H1 (cell line): ENCODE measurements at regions of chr2 and their contacts with region 1.

Region 1: GRCh38 chr2:27086090-27086723 is 365 bp upstream of the KHK start:
- DNase-seq: peak; percentile 79 to 99
- H3K4me3 ChIP-seq: peak overlapping the region; percentile 44 to 75 (median 61)
- H3K27ac ChIP-seq: no peak overlapping the region
- H3K4me1 ChIP-seq: peaks cover 4 to 23% (median 6%) of the 10 kb centered on the region in 4 experiments; a peak in 6 of 7 replicates
- H3K27me3 ChIP-seq: peaks cover 0 to 9% (median 4%) of the 10 kb centered on the region in 4 experiments; a peak in 2 of 7 replicates
- CTCF ChIP-seq: peak in 2 of 3 experiments; percentile 81 to 84; a peak in 3 of 4 replicates
- EP300 ChIP-seq: peak in 1 of 2 experiments; percentile 64; a peak in 1 of 3 replicates
- POLR2A ChIP-seq: peak in 1 of 2 experiments; percentile 40; a peak in 1 of 3 replicates
- RAD21 ChIP-seq: peak; percentile 32 to 48

Region 2: DNA sequence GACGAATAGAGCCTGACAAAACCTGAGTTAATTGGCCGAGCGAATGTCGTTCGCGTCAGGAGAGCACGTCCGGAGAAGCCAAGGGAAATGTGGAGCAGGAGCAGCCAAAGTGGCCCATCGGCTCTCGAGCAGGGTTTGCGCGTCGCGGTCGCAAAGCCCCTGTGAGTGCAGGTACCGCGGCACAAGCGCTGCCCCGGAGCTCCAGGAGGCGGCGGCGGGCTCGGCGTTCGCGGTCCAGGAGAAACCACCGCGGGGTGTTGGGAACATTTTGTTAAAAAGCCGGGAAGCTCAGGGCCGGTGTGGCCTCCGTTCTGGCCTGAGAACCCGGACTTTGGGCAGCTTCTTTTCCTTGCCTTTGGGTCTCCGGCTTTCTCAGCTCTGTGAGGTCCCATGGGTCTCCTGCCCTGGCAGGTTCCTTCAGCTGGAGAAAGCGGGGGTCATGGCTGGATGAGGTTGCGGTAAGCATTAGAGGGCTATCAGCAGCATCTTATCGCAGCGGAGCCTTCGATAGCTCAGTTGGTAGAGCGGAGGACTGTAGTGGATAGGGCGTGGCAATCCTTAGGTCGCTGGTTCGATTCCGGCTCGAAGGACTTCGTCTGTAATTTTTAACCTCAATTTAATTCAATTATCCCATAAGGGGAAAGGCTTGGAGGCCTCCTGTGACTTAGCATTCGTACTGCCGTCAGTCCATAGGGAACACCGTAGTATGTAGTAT is 35.8 kb before region 1 on chr2:
- CTCF ChIA-PET with region 1: interaction called, 160 read pairs
- POLR2A ChIA-PET with region 1: interaction called, 19 read pairs
- DNase-seq: peak; percentile 91 to 98
- H3K4me3 ChIP-seq: peak overlapping the region; percentile 80 to 88 (median 87)
- H3K27ac ChIP-seq: peak overlapping the region; percentile 64; the same call in 1 of the 2 replicates
- H3K4me1 ChIP-seq: no peaks in the 10 kb centered on the region; a peak in 4 of 7 replicates
- H3K27me3 ChIP-seq: no peaks in the 10 kb centered on the region
- CTCF ChIP-seq: peak in 2 of 3 experiments; percentile 11 to 12; a peak in 2 of 4 replicates
- EP300 ChIP-seq: no peak
- POLR2A ChIP-seq: peak in 1 of 2 experiments; percentile 73; a peak in 2 of 3 replicates
- RAD21 ChIP-seq: no peak; a peak in 1 of 4 replicates

Region 3: DNA sequence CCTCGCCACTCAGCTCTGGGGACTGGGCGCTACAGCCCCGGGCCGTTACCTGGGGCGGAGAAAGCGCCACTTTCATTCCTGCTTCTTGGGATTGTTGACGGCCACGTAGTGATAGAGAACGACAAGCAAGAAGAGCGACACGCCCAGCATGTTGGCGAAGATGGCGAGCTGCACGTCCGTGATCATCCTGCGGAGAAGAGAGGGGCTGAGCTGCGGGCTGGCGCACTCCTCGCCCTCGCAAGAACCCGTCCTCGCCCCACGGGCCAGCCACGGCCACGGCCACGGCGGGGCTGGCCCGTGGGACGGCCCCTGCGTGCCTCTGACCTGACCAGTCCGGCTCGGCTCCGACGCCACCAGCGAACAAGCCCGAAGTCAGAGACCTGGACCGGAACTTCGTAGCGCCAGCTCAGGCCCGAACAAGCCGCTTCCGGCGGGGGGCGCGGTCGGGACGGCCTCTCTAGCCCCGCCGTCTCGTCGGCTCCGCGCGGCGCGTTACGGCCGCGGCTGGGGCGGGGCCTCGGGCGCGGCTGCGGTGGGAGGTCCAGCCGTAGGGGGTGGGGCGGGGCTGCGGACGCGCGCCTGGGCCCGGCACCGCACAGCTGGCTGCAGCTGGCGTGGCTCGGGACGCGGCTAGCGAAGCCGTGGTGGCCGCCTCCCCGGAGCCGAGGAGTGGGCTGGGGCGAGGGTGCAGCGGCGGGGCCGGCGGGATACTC is 14.8 kb before region 1 on chr2 and contains the start of gene OST4:
- CTCF ChIA-PET with region 1: interaction called, 20 read pairs
- POLR2A ChIA-PET with region 1: interaction called, 63 read pairs
- DNase-seq: peak; percentile 58 to 94
- H3K4me3 ChIP-seq: peak within 1 kb of the TSS; percentile 82 to 99 (median 93)
- H3K27ac ChIP-seq: peak within 1 kb of the TSS; percentile 71; the same call in 1 of the 2 replicates
- H3K4me1 ChIP-seq: peaks cover 0 to 7% (median 4%) of the 10 kb centered on the region in 4 experiments; a peak in 5 of 7 replicates
- H3K27me3 ChIP-seq: 0 out of 7 replicates have a peak, but pooled peaks cover 0 to 3% (median 0%) of the 10 kb centered on the region in 4 experiments
- CTCF ChIP-seq: no peak
- EP300 ChIP-seq: no peak
- POLR2A ChIP-seq: peak in 1 of 2 experiments; percentile 76; a peak in 1 of 3 replicates
- RAD21 ChIP-seq: no peak
- total RNA-seq, gene OST4: 212 and 225 TPM in 2 replicates

Region 4: GRCh38 chr2:27133905-27134780 is 47.9 kb after region 1 on chr2 and contains the start of gene PREB:
- CTCF ChIA-PET with region 1: interaction called, 12 read pairs
- POLR2A ChIA-PET with region 1: interaction called, 5 read pairs
- DNase-seq: peak; percentile 92 to 100
- H3K4me3 ChIP-seq: peak within 1 kb of the TSS; percentile 68 to 91 (median 88)
- H3K27ac ChIP-seq: peak within 1 kb of the TSS; percentile 25; the same call in 1 of the 2 replicates
- H3K4me1 ChIP-seq: peaks cover 0 to 4% (median 3%) of the 10 kb centered on the region in 4 experiments; a peak in 5 of 7 replicates
- H3K27me3 ChIP-seq: no peaks in the 10 kb centered on the region
- CTCF ChIP-seq: peak in 2 of 3 experiments; percentile 46 to 60; a peak in 2 of 4 replicates
- EP300 ChIP-seq: no peak
- POLR2A ChIP-seq: no peak
- RAD21 ChIP-seq: peak; percentile 56 to 67
- total RNA-seq, gene PREB: 51.2 and 54.1 TPM in 2 replicates

Region 5: GRCh38 chr2:27211829-27212627 is 125.8 kb after region 1 on chr2 and contains the starts of genes ATRAID and SLC5A6:
- CTCF ChIA-PET with region 1: interaction called, 3 read pairs
- POLR2A ChIA-PET with region 1: interaction called, 29 read pairs
- DNase-seq: peak; percentile 59 to 93
- H3K4me3 ChIP-seq: peak within 1 kb of the TSS; percentile 77 to 97 (median 90)
- H3K27ac ChIP-seq: peak within 1 kb of the TSS; percentile 99
- H3K4me1 ChIP-seq: peaks cover 0 to 6% (median 2%) of the 10 kb centered on the region in 4 experiments; a peak in 5 of 7 replicates
- H3K27me3 ChIP-seq: no peaks in the 10 kb centered on the region
- CTCF ChIP-seq: no peak
- EP300 ChIP-seq: no peak
- POLR2A ChIP-seq: peak; percentile 68 to 97
- RAD21 ChIP-seq: no peak
- total RNA-seq, gene ATRAID: 103 and 109 TPM in 2 replicates
- total RNA-seq, gene SLC5A6: 118 and 123 TPM in 2 replicates